AG04449 (cell line): ENCODE measurements at regions of chr16 and their contacts with region 1.

Region 1: GRCh38 chr16:245105-245504 is 10.5 kb downstream of the FAM234A start:
- DNase-seq: no peak
- H3K4me3 ChIP-seq: no peak overlapping the region
- CTCF ChIP-seq: no peak

Region 2: DNA sequence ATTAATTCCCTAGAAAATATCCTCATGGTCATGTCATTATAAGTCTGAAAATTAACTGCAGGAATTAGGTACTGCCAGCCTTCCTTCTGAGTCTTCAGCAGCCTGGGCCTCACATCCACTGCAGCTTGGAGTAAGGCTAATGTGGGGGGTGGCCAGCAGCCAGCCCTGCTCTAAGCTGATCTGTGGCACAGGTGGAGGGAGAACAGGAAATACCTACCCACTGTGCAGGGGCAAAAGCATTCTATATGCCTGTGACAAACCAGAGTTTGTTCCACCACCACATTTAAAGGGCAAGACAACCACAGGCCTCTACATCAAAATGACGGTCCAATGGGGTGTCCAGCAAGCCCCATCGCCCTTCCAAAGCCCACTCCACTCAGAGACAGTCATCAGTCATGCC is 116.0 kb before region 1 on chr16:
- CTCF ChIA-PET with region 1: no interaction called
- POLR2A ChIA-PET with region 1: no interaction called
- DNase-seq: no peak
- H3K4me3 ChIP-seq: no peak overlapping the region
- CTCF ChIP-seq: no peak

Region 3: DNA sequence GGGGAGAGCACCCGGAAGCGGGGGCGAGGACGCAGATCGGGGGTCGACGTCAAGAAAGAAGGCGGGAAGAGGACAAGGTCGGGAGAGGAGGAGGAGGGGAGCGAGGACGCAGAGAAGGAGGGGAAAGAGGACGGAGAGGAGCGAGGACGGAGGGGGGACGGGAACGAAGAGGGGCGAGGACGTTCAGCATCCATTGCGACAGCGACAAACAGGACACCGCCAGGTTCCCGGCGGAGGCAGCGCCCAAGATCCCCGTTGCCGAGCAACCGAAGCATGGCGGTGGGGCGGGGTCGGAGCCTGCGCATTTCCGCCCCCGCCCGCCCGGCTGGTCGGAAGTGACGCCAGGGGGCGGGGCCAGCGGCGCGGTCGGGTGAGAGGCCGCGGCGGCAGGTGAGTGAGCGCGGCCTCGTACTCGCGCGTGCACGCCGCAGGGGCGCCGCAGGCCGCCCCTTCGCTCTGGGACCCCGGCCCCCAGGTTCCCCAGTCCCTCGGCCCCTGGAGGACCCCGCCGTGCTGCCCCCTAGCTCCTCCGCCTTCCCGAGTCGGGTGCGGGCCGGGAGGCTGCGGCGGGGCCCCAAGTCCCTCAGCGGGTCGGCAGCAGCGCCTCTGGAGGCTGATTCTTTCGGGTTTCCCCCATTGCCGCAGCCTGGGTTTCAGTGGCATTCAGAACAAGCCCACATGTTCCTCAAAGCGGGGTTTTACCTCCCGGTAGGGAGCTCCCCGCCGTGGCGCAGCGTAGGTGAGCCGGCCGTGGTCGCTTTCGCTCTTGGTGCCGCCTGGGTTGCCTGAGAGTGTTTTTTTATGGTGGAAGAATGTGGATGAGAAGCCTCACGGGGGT is 10.4 kb before region 1 on chr16 and contains the start of gene FAM234A:
- CTCF ChIA-PET with region 1: interaction called, 15 read pairs
- POLR2A ChIA-PET with region 1: interaction called, 3 read pairs
- DNase-seq: no peak
- H3K4me3 ChIP-seq: peak within 1 kb of the TSS; percentile 96
- CTCF ChIP-seq: peak; percentile 40

Region 4: GRCh38 chr16:263978-264951 is 19.2 kb after region 1 on chr16:
- CTCF ChIA-PET with region 1: no interaction called
- POLR2A ChIA-PET with region 1: no interaction called
- DNase-seq: no peak
- H3K4me3 ChIP-seq: no peak overlapping the region
- CTCF ChIP-seq: no peak